CD4-positive, alpha-beta memory T cell (primary cell): ENCODE measurements at regions of chr17 and their contacts with region 1.

Region 1: DNA sequence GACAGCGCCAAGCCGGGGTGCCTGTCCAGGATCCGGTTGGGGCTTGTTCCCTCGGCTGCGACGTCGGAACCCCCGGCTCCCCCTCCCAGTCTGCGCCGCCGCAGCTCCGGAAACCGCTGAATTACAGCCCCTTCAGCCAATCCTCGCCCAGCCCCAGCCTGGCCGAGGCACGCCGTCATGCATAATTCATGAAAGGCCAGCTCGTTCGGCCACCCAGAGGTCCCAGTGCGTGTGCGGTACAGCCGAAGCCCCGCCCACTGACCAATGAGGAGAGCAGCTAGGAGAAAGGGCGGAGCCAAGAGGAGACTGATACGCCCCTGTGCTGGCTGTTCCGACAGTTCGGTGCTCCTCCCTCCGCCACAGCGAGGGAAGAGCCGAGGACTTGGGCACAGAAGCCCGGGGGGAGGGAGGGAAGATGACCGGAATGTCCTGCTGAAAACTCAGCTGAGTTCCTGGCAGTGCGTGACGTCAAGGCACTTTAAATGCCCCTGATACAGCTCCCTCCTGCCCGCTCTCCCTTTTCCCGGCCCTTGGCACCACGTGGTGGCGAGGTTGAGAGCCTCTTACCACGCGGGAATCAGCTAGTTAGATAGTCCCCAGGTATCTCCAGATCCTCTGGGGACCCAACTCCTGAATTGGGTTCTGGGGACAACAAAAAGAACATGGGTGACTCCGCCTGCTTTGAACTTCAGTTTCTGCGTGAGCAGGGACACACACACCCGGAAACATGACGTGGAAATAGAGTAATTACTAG is at the start of gene STAT3:
- DNase-seq: peak; percentile 100
- H3K4me3 ChIP-seq: peak within 1 kb of the TSS; percentile 86 to 92
- H3K4me3 Mint-ChIP-seq: peak within 1 kb of the TSS; percentile 93 to 99 (median 96)
- H3K27ac ChIP-seq: peak within 1 kb of the TSS; percentile 99
- H3K27ac Mint-ChIP-seq: peak within 1 kb of the TSS; percentile 99 to 100 (median 100)
- H3K4me1 ChIP-seq: peaks cover 42% of the 10 kb centered on the region
- H3K4me1 Mint-ChIP-seq: peaks cover 28 to 53% (median 41%) of the 10 kb centered on the region in 4 donors
- H3K27me3 ChIP-seq: no peaks in the 10 kb centered on the region
- H3K27me3 Mint-ChIP-seq: no peaks in the 10 kb centered on the region
- total RNA-seq, gene STAT3: 129 to 131 TPM

Region 2: GRCh38 chr17:41688699-41689496 is 699.7 kb before region 1 on chr17 and contains the start of gene EIF1:
- CTCF ChIA-PET with region 1: no interaction called
- POLR2A ChIA-PET with region 1: interaction called, 6 read pairs
- intact Hi-C with region 1: loop called (anchors 10 kb)
- DNase-seq: peak; percentile 99 to 100 (median 99)
- H3K4me3 ChIP-seq: peak within 1 kb of the TSS; percentile 89 to 95
- H3K4me3 Mint-ChIP-seq: peak within 1 kb of the TSS; percentile 95 to 98 (median 96)
- H3K27ac ChIP-seq: peak within 1 kb of the TSS; percentile 99
- H3K27ac Mint-ChIP-seq: peak within 1 kb of the TSS; percentile 99 to 100 (median 100)
- H3K4me1 ChIP-seq: peaks cover 36% of the 10 kb centered on the region
- H3K4me1 Mint-ChIP-seq: peaks cover 19 to 60% (median 31%) of the 10 kb centered on the region in 4 donors
- H3K27me3 ChIP-seq: no peaks in the 10 kb centered on the region
- H3K27me3 Mint-ChIP-seq: no peaks in the 10 kb centered on the region
- total RNA-seq, gene EIF1: 776 to 839 TPM

Region 3: DNA sequence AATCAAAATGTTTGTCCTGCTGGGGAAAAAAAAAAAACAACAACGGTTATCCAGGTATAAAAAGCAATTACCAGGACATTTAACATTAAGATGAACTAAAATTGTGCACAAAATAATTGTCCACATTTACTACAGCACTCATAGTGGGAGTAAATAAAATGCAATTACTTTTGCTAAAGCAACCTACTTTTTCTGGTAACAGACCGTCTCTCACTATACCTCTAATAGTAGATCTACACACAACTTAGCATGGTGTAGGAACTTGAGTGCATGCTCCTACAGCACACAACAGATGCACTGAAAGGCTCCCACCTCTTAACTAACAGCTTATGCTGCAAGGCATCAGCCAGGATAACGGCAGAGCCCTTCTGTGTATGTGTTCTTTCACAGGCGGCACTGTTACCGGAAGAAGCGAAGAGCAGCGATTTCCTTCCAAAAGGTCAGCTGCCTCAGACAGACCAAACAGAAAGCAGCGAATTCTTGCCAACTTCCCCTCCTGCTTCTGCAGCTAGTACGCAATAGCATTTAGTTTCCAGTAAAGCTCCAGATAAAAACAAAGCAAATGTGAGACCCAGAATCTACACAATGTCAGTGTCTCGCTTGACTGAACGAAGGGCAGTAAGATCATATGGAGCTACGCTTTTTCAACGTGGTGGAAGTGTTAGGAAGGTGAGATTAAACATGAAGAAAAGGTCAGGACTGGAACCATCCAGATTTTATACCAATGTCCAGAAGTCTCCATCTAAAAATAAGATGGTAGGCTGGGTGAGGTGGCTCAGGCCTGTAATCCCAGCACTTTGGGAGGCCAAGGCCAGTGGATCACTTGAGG is 140.0 kb before region 1 on chr17:
- CTCF ChIA-PET with region 1: no interaction called
- POLR2A ChIA-PET with region 1: interaction called, 24 read pairs
- intact Hi-C with region 1: no loop called
- DNase-seq: peak; percentile 82 to 95 (median 88)
- H3K4me3 ChIP-seq: peak overlapping the region; percentile 20 to 45
- H3K4me3 Mint-ChIP-seq: peak overlapping the region; percentile 78 to 96 (median 85)
- H3K27ac ChIP-seq: peak overlapping the region; percentile 90
- H3K27ac Mint-ChIP-seq: peak overlapping the region; percentile 92 to 99 (median 98)
- H3K4me1 ChIP-seq: peaks cover 78% of the 10 kb centered on the region
- H3K4me1 Mint-ChIP-seq: peaks cover 55 to 81% (median 68%) of the 10 kb centered on the region in 4 donors
- H3K27me3 ChIP-seq: no peaks in the 10 kb centered on the region
- H3K27me3 Mint-ChIP-seq: no peaks in the 10 kb centered on the region

Region 4: GRCh38 chr17:42312285-42313130 is 76.0 kb before region 1 on chr17:
- CTCF ChIA-PET with region 1: interaction called, 9 read pairs
- POLR2A ChIA-PET with region 1: interaction called, 58 read pairs
- intact Hi-C with region 1: no loop called
- DNase-seq: peak; percentile 69 to 80 (median 73)
- H3K4me3 ChIP-seq: peak overlapping the region in 1 of 2 donors; percentile 11
- H3K4me3 Mint-ChIP-seq: peak overlapping the region; percentile 37 to 80 (median 70)
- H3K27ac ChIP-seq: peak overlapping the region; percentile 46
- H3K27ac Mint-ChIP-seq: peak overlapping the region; percentile 75 to 89 (median 86)
- H3K4me1 ChIP-seq: peaks cover 70% of the 10 kb centered on the region
- H3K4me1 Mint-ChIP-seq: peaks cover 40 to 75% (median 53%) of the 10 kb centered on the region in 4 donors
- H3K27me3 ChIP-seq: no peaks in the 10 kb centered on the region
- H3K27me3 Mint-ChIP-seq: no peaks in the 10 kb centered on the region

Region 5: GRCh38 chr17:42365136-42365535 is 23.4 kb before region 1 on chr17:
- CTCF ChIA-PET with region 1: interaction called, 4 read pairs
- POLR2A ChIA-PET with region 1: interaction called, 10 read pairs
- intact Hi-C with region 1: no loop called
- DNase-seq: no peak
- H3K4me3 ChIP-seq: no peak overlapping the region
- H3K4me3 Mint-ChIP-seq: peak overlapping the region in 4 of 8 donors; percentile 28 to 46 (median 42)
- H3K27ac ChIP-seq: no peak overlapping the region
- H3K27ac Mint-ChIP-seq: peak overlapping the region in 3 of 7 donors; percentile 52 to 73 (median 54)
- H3K4me1 ChIP-seq: peaks cover 77% of the 10 kb centered on the region
- H3K4me1 Mint-ChIP-seq: peaks cover 59 to 82% (median 69%) of the 10 kb centered on the region in 4 donors
- H3K27me3 ChIP-seq: no peaks in the 10 kb centered on the region
- H3K27me3 Mint-ChIP-seq: no peaks in the 10 kb centered on the region

Region 6: GRCh38 chr17:42414704-42415409 is 26.3 kb after region 1 on chr17:
- CTCF ChIA-PET with region 1: no interaction called
- POLR2A ChIA-PET with region 1: interaction called, 10 read pairs
- intact Hi-C with region 1: no loop called
- DNase-seq: peak in 4 of 5 donors; percentile 30 to 54 (median 38)
- H3K4me3 ChIP-seq: peak overlapping the region in 1 of 2 donors; percentile 37
- H3K4me3 Mint-ChIP-seq: peak overlapping the region in 7 of 8 donors; percentile 53 to 85 (median 76)
- H3K27ac ChIP-seq: no peak overlapping the region
- H3K27ac Mint-ChIP-seq: peak overlapping the region in 6 of 7 donors; percentile 3 to 81 (median 40)
- H3K4me1 ChIP-seq: peaks cover 17% of the 10 kb centered on the region
- H3K4me1 Mint-ChIP-seq: peaks cover 6 to 16% (median 11%) of the 10 kb centered on the region in 4 donors
- H3K27me3 ChIP-seq: no peaks in the 10 kb centered on the region
- H3K27me3 Mint-ChIP-seq: no peaks in the 10 kb centered on the region